ENCODE measurements at regions of chr7 and their contacts with region 1.

Region 1: GRCh38 chr7:108146070-108146837 is 16.1 kb upstream of the LAMB4 start:
- DNase-seq: peak; percentile 63
- H3K27ac ChIP-seq: no peak overlapping the region
- CTCF ChIP-seq: peak; percentile 98

Region 2: DNA sequence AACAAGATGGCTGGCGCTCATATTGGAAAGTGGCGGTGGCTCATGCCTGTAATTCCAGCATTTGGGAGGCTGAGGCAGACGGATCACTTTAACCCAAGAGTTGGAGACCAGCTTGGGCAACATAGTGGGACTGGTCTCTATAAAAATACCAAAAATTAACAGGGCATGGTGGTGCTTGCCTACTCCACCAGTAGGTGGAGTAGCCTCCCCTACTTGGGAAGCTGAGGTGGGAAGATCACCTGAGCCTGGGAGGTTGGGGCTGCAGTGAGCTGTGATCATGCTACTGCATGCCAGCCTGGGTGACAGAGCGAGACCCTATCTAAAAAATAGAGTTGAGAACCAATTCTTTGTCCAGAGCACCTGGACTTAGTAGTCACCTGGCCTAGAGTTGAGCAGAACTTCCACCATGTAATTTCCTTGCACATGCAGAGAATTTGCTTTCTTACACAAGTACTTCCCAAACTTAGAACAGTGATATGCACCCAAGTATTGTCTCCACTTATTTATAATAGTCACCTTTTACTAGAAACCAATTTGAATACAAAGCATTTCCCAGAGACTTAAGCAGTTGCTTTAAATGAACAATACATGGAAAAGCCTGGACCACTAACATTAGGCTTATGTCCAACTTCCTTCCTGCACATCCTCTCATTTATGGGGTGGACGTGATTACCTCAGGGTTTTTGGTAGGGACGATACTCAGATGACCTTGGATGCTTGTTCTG is 32.0 kb before region 1 on chr7:
- CTCF ChIA-PET with region 1: interaction called, 12 read pairs
- POLR2A ChIA-PET with region 1: no interaction called
- DNase-seq: no peak
- H3K27ac ChIP-seq: no peak overlapping the region
- CTCF ChIP-seq: peak; percentile 26; the same call in 1 of the 2 replicates

Region 3: GRCh38 chr7:108132551-108133265 is 13.5 kb before region 1 on chr7:
- CTCF ChIA-PET with region 1: interaction called, 13 read pairs
- POLR2A ChIA-PET with region 1: no interaction called
- DNase-seq: peak; percentile 74
- H3K27ac ChIP-seq: peak overlapping the region; percentile 69
- CTCF ChIP-seq: no peak